GM10248 (cell line): ENCODE measurements at regions of chr1 and their contacts with region 1.

Region 1: DNA sequence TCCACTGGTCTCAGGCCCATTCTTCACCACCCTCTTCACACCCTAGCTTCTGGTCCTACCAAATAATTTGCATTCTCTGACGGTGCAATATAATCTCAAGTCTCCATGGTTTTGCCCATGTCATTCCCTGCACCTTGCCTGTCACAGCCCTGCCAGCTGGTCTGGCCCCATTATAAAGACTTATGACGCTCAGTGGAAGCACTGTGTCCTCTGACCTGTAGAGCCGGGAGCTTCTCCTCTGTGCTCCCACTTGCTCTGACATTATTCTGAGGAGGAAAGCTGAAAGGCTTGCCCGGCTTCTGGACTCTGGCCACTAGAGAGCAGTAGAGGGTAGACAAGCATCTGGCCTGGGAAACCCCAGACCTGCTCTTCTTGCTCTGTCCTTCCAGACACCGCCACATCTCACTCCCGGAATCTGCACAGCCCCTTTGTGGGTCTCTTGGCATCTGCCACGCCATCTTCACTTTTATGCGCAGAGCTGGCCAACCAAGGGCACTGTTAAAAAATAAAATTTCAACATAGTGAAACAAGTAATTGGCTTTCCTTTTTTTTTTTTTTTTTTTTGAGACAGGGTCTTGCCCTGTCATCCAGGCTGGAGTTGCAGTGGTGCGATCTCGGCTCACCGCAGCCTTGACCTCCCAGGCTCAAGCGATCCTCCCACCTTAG is 44.4 kb downstream of the NENF start:
- DNase-seq: peak; percentile 87
- CTCF ChIP-seq: peak; percentile 90

Region 2: GRCh38 chr1:212498283-212499040 is 21.3 kb after region 1 on chr1:
- CTCF ChIA-PET with region 1: interaction called, 23 read pairs
- POLR2A ChIA-PET with region 1: no interaction called
- DNase-seq: no peak
- CTCF ChIP-seq: no peak

Region 3: GRCh38 chr1:212529211-212529741 is 52.1 kb after region 1 on chr1:
- CTCF ChIA-PET with region 1: interaction called, 10 read pairs
- POLR2A ChIA-PET with region 1: no interaction called
- DNase-seq: no peak
- CTCF ChIP-seq: no peak

Region 4: DNA sequence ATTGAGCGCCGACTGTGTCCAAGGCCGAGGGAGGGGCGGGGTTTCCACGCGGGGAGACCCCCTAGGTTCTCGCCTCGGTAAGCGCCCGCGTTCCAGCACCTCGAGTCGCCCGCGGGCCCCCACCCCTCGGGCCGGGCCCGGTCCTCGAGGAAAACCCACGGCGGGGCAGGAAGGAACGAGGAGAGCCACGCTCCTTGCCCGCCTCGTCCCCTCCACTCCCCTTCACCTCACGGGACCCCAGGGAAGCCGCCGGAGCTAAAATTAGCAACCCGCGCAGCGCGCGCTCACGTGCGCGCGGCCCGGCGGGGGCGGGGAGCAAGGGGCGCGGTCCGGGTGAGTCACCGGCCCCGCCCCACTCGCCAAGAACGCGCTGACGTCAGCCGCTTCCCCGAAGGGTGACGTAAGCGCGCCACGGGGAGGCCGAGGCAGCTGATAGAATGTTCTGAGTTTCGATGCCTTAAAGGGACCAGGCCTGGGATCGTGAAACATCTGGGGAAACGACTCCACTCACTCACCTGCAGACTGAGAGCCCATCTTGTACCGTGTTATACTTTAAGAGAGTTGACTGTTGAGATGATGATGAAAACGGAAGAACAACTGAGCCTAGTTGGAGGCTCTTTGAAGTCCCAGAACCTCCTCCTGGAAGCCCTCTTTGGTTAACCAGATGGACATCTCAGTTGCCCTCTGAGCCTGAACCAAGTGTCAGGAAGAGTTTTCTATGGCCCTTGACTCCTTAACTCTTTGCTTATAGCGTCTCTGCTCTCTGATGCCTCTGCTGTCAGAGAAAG is 81.7 kb after region 1 on chr1:
- CTCF ChIA-PET with region 1: interaction called, 12 read pairs
- POLR2A ChIA-PET with region 1: no interaction called
- DNase-seq: peak; percentile 96
- CTCF ChIP-seq: no peak

Region 5: DNA sequence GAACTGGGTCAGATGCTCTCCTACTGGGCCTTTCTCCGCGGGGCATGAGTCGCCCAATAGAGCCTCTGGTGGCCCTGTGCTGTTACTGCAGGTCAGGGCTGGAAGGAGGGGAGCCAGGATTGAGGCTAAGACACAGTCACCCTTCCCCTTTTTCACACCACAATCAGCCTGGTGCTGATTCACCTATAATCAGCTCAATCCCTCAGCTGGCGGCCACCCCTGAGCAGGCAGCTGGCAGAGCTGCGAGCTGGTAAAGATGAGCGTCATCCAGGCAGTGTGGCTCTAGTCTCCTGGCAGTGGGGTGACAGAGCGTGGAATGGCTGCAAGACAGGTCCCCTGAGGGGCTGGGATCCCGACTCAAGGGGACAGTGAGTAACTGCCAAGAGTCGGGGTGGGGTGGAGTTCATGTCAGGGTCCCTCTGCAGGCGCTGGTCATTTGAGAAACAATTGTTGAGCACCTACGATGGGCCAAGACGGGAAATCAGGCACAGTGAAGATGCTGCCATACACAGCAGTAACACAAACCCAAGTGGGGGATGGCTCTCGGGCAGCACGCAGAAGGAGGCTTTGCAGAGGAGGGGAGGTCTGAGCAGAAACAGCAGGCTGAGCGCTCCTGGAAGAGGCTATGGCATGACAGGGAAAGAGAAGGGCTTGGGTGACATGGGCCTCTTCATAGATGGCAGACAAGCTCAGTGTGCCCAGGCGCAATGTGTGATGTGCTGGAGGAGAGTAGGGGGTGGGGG is 153.2 kb after region 1 on chr1:
- CTCF ChIA-PET with region 1: interaction called, 24 read pairs
- POLR2A ChIA-PET with region 1: no interaction called
- DNase-seq: peak; percentile 83
- CTCF ChIP-seq: peak; percentile 89

Region 6: GRCh38 chr1:212782422-212783154 is 305.4 kb after region 1 on chr1:
- CTCF ChIA-PET with region 1: interaction called, 20 read pairs
- POLR2A ChIA-PET with region 1: no interaction called
- DNase-seq: no peak
- CTCF ChIP-seq: peak; percentile 54